PC-3 (cell line): ENCODE measurements at regions of chr17 and their contacts with region 1.

Region 1: GRCh38 chr17:31524926-31525800 is 133.7 kb downstream of the RAB11FIP4 start:
- DNase-seq: peak; percentile 81
- ATAC-seq: peak; percentile 93
- H3K4me3 ChIP-seq: no peak overlapping the region
- H3K27ac ChIP-seq: no peak overlapping the region
- H3K4me1 ChIP-seq: no peaks in the 10 kb centered on the region; the same call in 1 of the 2 replicates
- H3K27me3 ChIP-seq: no peaks in the 10 kb centered on the region
- CTCF ChIP-seq: peak; percentile 82

Region 2: DNA sequence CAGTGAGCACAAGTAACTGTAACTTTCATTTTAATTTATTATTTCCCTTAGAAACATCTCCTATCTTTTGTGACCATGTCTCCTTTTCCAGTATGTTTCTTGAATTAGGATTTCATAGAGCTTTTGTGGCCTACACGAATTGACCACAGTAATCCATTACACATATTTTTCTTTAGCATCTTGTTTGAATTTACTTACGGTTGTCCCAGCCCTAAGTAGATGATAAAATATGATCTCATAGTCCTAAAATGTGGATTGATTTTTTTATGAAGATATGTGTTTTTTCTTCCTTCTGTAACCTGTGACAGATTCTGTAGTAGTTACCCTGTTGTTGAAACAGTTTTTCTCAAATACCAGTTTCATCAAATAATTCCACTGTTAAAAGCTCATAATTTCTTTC is 368.8 kb before region 1 on chr17:
- CTCF ChIA-PET with region 1: no interaction called
- POLR2A ChIA-PET with region 1: no interaction called
- intact Hi-C with region 1: no loop called
- DNase-seq: no peak
- ATAC-seq: no peak
- H3K4me3 ChIP-seq: no peak overlapping the region
- H3K27ac ChIP-seq: no peak overlapping the region
- H3K4me1 ChIP-seq: peaks cover 9% of the 10 kb centered on the region; the same call in 1 of the 2 replicates
- H3K27me3 ChIP-seq: no peaks in the 10 kb centered on the region
- CTCF ChIP-seq: no peak

Region 3: GRCh38 chr17:31388770-31389661 is 136.1 kb before region 1 on chr17:
- CTCF ChIA-PET with region 1: no interaction called
- POLR2A ChIA-PET with region 1: no interaction called
- intact Hi-C with region 1: loop called (anchors 5 kb)
- DNase-seq: peak; percentile 10
- ATAC-seq: 0 out of 2 replicates have a peak, but pooled peaks have one; percentile 19
- H3K4me3 ChIP-seq: no peak overlapping the region
- H3K27ac ChIP-seq: no peak overlapping the region
- H3K4me1 ChIP-seq: no peaks in the 10 kb centered on the region
- H3K27me3 ChIP-seq: no peaks in the 10 kb centered on the region; the same call in 1 of the 2 replicates
- CTCF ChIP-seq: peak; percentile 59

Region 4: GRCh38 chr17:31437720-31438420 is 87.3 kb before region 1 on chr17:
- CTCF ChIA-PET with region 1: no interaction called
- POLR2A ChIA-PET with region 1: no interaction called
- intact Hi-C with region 1: loop called (anchors 1 kb)
- DNase-seq: no peak
- ATAC-seq: no peak
- H3K4me3 ChIP-seq: no peak overlapping the region
- H3K27ac ChIP-seq: no peak overlapping the region
- H3K4me1 ChIP-seq: no peaks in the 10 kb centered on the region
- H3K27me3 ChIP-seq: no peaks in the 10 kb centered on the region
- CTCF ChIP-seq: no peak

Region 5: GRCh38 chr17:31446195-31446967 is 78.8 kb before region 1 on chr17:
- CTCF ChIA-PET with region 1: no interaction called
- POLR2A ChIA-PET with region 1: no interaction called
- intact Hi-C with region 1: loop called (anchors 1 kb)
- DNase-seq: peak; percentile 15
- ATAC-seq: no peak
- H3K4me3 ChIP-seq: no peak overlapping the region
- H3K27ac ChIP-seq: no peak overlapping the region
- H3K4me1 ChIP-seq: no peaks in the 10 kb centered on the region
- H3K27me3 ChIP-seq: no peaks in the 10 kb centered on the region
- CTCF ChIP-seq: 0 out of 2 replicates have a peak, but pooled peaks have one; percentile 34

Region 6: GRCh38 chr17:31645351-31645750 is 120.2 kb after region 1 on chr17:
- CTCF ChIA-PET with region 1: no interaction called
- POLR2A ChIA-PET with region 1: no interaction called
- intact Hi-C with region 1: no loop called
- DNase-seq: no peak
- ATAC-seq: no peak
- H3K4me3 ChIP-seq: no peak overlapping the region
- H3K27ac ChIP-seq: no peak overlapping the region
- H3K4me1 ChIP-seq: no peaks in the 10 kb centered on the region
- H3K27me3 ChIP-seq: no peaks in the 10 kb centered on the region
- CTCF ChIP-seq: no peak